Naive thymus-derived CD4-positive, alpha-beta T cell (primary cell): ENCODE measurements at regions of chr20 and their contacts with region 1.

Region 1: DNA sequence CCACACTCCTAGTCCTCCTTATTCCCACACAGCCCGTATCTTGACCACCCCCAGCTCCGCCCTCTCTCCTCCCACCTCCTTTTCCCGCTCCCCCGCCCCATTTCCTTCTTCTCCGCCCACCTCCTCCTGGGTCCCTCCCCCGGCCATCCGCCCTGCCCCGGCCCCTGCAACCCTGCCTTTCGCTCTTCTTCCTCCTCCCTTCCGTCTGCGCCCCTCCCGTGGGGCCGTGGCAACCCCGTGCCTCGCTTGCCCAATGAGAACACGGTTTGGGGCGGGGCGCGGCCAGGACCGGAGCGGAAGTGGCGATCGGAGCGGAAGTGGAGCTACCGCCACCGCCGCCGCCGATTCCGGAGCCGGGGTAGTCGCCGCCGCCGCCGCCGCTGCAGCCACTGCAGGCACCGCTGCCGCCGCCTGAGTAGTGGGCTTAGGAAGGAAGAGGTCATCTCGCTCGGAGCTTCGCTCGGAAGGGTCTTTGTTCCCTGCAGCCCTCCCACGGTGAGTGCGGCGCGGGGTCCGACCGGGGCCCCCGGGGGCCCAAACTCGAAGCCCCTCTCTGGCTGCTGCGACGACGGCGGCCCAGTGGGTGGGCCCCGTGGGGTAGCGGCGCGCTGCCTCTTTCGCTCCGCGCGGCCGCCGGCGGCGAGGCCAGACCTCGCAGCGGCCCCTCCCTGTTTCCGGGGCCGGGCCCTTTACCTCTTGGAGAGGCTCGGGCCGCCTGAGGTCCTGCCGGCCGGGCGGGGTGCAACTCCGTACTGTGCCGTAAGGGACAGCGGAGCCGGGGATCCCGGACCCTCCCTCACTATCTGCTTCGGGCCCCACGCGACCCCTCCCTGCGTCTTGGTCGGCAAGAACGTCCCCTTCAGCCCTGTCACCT is at the start of gene YWHAB:
- DNase-seq: peak; percentile 89 to 98 (median 95)
- ATAC-seq: peak; percentile 98
- H3K4me3 ChIP-seq: peak within 1 kb of the TSS; percentile 87
- H3K4me3 Mint-ChIP-seq: peak within 1 kb of the TSS; percentile 83 to 98 (median 97)
- H3K27ac ChIP-seq: peak within 1 kb of the TSS; percentile 96
- H3K27ac Mint-ChIP-seq: peak within 1 kb of the TSS; percentile 89 to 99 (median 95)
- H3K4me1 ChIP-seq: peaks cover 39% of the 10 kb centered on the region in 2 donors
- H3K4me1 Mint-ChIP-seq: peaks cover 39 to 79% (median 68%) of the 10 kb centered on the region in 7 donors
- H3K27me3 ChIP-seq: no peaks in the 10 kb centered on the region
- H3K27me3 Mint-ChIP-seq: no peaks in the 10 kb centered on the region
- total RNA-seq, gene YWHAB: 135 to 262 (median 203) TPM

Region 2: GRCh38 chr20:44310664-44311639 is 574.7 kb before region 1 on chr20 and contains the start of gene FITM2:
- CTCF ChIA-PET with region 1: no interaction called
- POLR2A ChIA-PET with region 1: no interaction called
- intact Hi-C with region 1: loop called (anchors 2 to 5 kb)
- DNase-seq: peak; percentile 96 to 99 (median 98)
- ATAC-seq: peak; percentile 99
- H3K4me3 ChIP-seq: peak within 1 kb of the TSS; percentile 98
- H3K4me3 Mint-ChIP-seq: peak within 1 kb of the TSS; percentile 87 to 97 (median 95)
- H3K27ac ChIP-seq: peak within 1 kb of the TSS; percentile 82
- H3K27ac Mint-ChIP-seq: peak within 1 kb of the TSS; percentile 91 to 98 (median 93)
- H3K4me1 ChIP-seq: peaks cover 12 to 18% of the 10 kb centered on the region in 2 donors
- H3K4me1 Mint-ChIP-seq: peaks cover 15 to 35% (median 28%) of the 10 kb centered on the region in 7 donors
- H3K27me3 ChIP-seq: no peaks in the 10 kb centered on the region
- H3K27me3 Mint-ChIP-seq: peaks cover 0 to 8% (median 0%) of the 10 kb centered on the region in 5 donors
- total RNA-seq, gene FITM2: 3.1 to 7.9 (median 5.0) TPM

Region 3: GRCh38 chr20:44733341-44734069 is 152.1 kb before region 1 on chr20:
- CTCF ChIA-PET with region 1: no interaction called
- POLR2A ChIA-PET with region 1: no interaction called
- intact Hi-C with region 1: loop called in 1 of 2 experiments (anchors 10 kb)
- DNase-seq: peak; percentile 34 to 73 (median 57)
- ATAC-seq: peak; percentile 77
- H3K4me3 ChIP-seq: no peak overlapping the region
- H3K4me3 Mint-ChIP-seq: no peak overlapping the region
- H3K27ac ChIP-seq: no peak overlapping the region
- H3K27ac Mint-ChIP-seq: peak overlapping the region in 1 of 9 donors; percentile 32
- H3K4me1 ChIP-seq: no peaks in the 10 kb centered on the region
- H3K4me1 Mint-ChIP-seq: peaks cover 11 to 23% (median 20%) of the 10 kb centered on the region in 7 donors
- H3K27me3 ChIP-seq: no peaks in the 10 kb centered on the region
- H3K27me3 Mint-ChIP-seq: no peaks in the 10 kb centered on the region

Region 4: GRCh38 chr20:44909872-44910689 is 24.5 kb after region 1 on chr20 and contains the start of gene PABPC1L:
- CTCF ChIA-PET with region 1: interaction called, 8 read pairs
- POLR2A ChIA-PET with region 1: interaction called, 8 read pairs
- intact Hi-C with region 1: loop called (anchors 1 kb)
- DNase-seq: peak; percentile 58 to 86 (median 71)
- ATAC-seq: peak; percentile 97
- H3K4me3 ChIP-seq: peak within 1 kb of the TSS; percentile 69
- H3K4me3 Mint-ChIP-seq: peak within 1 kb of the TSS; percentile 75 to 89 (median 85)
- H3K27ac ChIP-seq: peak within 1 kb of the TSS; percentile 53
- H3K27ac Mint-ChIP-seq: peak within 1 kb of the TSS; percentile 46 to 83 (median 78)
- H3K4me1 ChIP-seq: peaks cover 6 to 17% of the 10 kb centered on the region in 2 donors
- H3K4me1 Mint-ChIP-seq: peaks cover 12 to 47% (median 38%) of the 10 kb centered on the region in 7 donors
- H3K27me3 ChIP-seq: no peaks in the 10 kb centered on the region
- H3K27me3 Mint-ChIP-seq: no peaks in the 10 kb centered on the region
- total RNA-seq, gene PABPC1L: 34.0 to 71.7 (median 59.0) TPM

Region 5: GRCh38 chr20:44979090-44979621 is 93.5 kb after region 1 on chr20:
- CTCF ChIA-PET with region 1: no interaction called
- POLR2A ChIA-PET with region 1: interaction called, 10 read pairs
- intact Hi-C with region 1: no loop called
- DNase-seq: peak in 8 of 9 donors; percentile 60 to 93 (median 86)
- ATAC-seq: peak; percentile 93
- H3K4me3 ChIP-seq: peak overlapping the region; percentile 40
- H3K4me3 Mint-ChIP-seq: peak overlapping the region; percentile 74 to 90 (median 79)
- H3K27ac ChIP-seq: peak overlapping the region; percentile 98
- H3K27ac Mint-ChIP-seq: peak overlapping the region; percentile 86 to 98 (median 97)
- H3K4me1 ChIP-seq: peaks cover 64 to 70% of the 10 kb centered on the region in 2 donors
- H3K4me1 Mint-ChIP-seq: peaks cover 71 to 96% (median 90%) of the 10 kb centered on the region in 7 donors
- H3K27me3 ChIP-seq: no peaks in the 10 kb centered on the region
- H3K27me3 Mint-ChIP-seq: no peaks in the 10 kb centered on the region

Region 6: DNA sequence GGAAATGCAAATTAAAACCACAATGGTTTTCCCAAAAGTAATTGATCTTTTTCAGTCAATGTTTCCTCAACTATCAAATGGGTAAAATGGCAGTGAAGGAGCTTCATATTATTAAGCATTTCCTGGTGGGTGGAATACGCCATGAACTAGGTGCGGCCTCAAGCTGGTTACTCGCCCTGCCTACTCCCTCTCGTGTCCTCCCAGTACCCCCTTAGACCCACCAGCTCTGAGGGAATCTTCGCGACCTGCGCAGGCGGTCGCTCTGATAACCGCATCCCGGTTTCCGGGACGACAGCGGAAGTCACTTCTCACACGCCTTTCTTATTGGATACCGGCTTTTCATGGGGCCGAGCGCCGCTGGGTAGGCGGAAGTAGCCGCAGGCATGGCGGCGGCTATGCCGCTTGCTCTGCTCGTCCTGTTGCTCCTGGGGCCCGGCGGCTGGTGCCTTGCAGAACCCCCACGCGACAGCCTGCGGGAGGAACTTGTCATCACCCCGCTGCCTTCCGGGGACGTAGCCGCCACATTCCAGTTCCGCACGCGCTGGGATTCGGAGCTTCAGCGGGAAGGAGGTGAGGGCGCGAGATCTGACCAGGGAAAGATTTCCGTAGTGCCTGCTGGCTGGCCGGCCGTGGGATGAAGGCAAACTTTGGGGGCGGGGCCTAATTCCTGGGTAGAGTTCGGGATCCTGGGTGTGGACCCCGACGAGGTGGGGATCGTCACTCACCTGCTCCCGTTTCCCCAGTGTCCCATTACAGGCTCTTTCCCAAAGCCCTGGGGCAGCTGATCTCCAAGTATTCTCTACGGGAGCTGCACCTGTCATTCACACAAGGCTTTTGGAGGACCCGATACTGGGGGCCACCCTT is 530.4 kb after region 1 on chr20 and contains the start of gene PIGT:
- CTCF ChIA-PET with region 1: no interaction called
- POLR2A ChIA-PET with region 1: interaction called, 3 read pairs
- intact Hi-C with region 1: loop called in 1 of 2 experiments (anchors 2 kb)
- DNase-seq: peak; percentile 71 to 94 (median 93)
- ATAC-seq: peak; percentile 98
- H3K4me3 ChIP-seq: peak within 1 kb of the TSS; percentile 98
- H3K4me3 Mint-ChIP-seq: peak within 1 kb of the TSS; percentile 91 to 97 (median 94)
- H3K27ac ChIP-seq: peak within 1 kb of the TSS; percentile 95
- H3K27ac Mint-ChIP-seq: peak within 1 kb of the TSS; percentile 94 to 99 (median 97)
- H3K4me1 ChIP-seq: peaks cover 12 to 21% of the 10 kb centered on the region in 2 donors
- H3K4me1 Mint-ChIP-seq: peaks cover 17 to 50% (median 32%) of the 10 kb centered on the region in 7 donors
- H3K27me3 ChIP-seq: no peaks in the 10 kb centered on the region
- H3K27me3 Mint-ChIP-seq: no peaks in the 10 kb centered on the region
- total RNA-seq, gene PIGT: 78.7 to 140 (median 85.0) TPM

Region 7: DNA sequence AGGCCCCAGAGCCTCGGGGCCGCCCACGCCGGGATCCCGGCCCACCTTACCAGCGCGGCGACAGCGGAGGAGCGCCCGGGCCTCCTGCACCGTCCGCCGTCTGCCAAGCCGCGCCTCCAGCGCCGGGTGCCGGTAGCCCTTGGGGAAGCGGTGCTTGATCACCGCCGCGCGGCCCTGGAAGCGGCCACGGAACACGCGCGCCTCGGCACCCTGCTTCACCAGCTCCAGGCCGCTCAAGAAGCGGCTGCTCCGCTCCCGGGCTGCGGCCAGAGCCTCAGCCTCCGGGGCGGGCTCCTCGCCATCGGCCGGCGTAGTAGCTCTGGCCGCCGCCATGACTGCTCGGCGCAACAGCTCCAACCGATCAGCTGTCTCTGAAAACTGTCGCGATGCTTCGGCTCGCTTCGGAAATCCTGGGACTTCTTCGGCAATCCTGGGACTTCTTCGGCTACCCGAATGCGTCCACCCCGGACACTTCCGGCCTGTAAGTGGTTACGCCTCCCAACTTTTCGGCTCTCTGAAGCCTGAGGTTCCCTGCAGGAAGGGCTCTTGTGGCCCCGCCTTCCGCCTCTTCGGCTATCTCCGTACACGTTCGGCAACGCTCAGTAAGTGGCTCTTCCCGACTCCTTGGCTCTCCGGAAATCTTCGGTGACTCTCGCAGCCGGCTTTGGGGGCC is 1803.6 kb after region 1 on chr20 and contains the start of gene TP53RK:
- CTCF ChIA-PET with region 1: no interaction called
- POLR2A ChIA-PET with region 1: no interaction called
- intact Hi-C with region 1: loop called in 1 of 2 experiments (anchors 10 kb)
- DNase-seq: peak; percentile 85 to 98 (median 96)
- ATAC-seq: peak; percentile 97
- H3K4me3 ChIP-seq: peak within 1 kb of the TSS; percentile 84
- H3K4me3 Mint-ChIP-seq: peak within 1 kb of the TSS; percentile 90 to 100 (median 96)
- H3K27ac ChIP-seq: peak within 1 kb of the TSS; percentile 90
- H3K27ac Mint-ChIP-seq: peak within 1 kb of the TSS; percentile 91 to 97 (median 95)
- H3K4me1 ChIP-seq: peaks cover 20 to 30% of the 10 kb centered on the region in 2 donors
- H3K4me1 Mint-ChIP-seq: peaks cover 38 to 54% (median 45%) of the 10 kb centered on the region in 7 donors
- H3K27me3 ChIP-seq: no peaks in the 10 kb centered on the region
- H3K27me3 Mint-ChIP-seq: no peaks in the 10 kb centered on the region
- total RNA-seq, gene TP53RK: 4.4 to 27.7 (median 17.7) TPM